Calu3 (cell line): ENCODE measurements at regions of chr10 and their contacts with region 1.

Region 1: DNA sequence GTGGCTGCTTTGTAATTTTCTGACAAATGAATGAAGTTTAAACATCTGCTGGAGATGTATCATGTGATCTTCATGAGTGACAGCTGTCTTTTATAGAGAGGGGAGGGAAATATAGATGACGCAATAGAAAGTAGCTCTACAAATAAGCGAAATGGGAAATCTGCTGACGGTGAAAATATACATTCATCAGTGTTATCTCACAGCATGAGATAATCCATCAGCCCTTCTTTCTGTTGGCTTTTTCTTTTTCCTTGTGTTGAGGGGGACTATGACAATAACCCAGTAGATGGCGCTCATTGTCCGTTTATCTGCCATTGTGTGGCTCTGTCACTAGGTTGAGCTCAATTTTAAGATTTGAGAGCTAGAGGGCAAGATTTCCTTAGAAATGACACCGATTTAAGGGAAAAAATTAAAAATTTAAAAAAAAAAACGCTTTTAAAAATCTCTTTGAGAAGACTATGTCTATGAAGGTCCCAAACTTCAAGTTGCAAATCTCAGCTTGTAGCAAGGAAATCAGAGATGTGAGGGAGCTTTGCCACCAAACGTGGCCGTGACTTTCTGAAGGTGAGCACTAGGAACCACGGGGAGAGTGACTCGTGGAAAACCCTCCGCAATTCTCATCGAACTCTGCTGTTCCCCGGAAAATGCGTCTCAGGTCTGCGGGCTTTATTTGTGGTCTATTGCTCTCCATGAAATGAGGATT is 114.6 kb upstream of the SFMBT2 start:
- DNase-seq: peak; percentile 71
- H3K4me3 Mint-ChIP-seq: no peak overlapping the region
- H3K27ac Mint-ChIP-seq: no peak overlapping the region
- H3K4me1 Mint-ChIP-seq: no peaks in the 10 kb centered on the region
- H3K27me3 Mint-ChIP-seq: peaks cover 35% of the 10 kb centered on the region
- CTCF ChIP-seq: peak; percentile 48

Region 2: DNA sequence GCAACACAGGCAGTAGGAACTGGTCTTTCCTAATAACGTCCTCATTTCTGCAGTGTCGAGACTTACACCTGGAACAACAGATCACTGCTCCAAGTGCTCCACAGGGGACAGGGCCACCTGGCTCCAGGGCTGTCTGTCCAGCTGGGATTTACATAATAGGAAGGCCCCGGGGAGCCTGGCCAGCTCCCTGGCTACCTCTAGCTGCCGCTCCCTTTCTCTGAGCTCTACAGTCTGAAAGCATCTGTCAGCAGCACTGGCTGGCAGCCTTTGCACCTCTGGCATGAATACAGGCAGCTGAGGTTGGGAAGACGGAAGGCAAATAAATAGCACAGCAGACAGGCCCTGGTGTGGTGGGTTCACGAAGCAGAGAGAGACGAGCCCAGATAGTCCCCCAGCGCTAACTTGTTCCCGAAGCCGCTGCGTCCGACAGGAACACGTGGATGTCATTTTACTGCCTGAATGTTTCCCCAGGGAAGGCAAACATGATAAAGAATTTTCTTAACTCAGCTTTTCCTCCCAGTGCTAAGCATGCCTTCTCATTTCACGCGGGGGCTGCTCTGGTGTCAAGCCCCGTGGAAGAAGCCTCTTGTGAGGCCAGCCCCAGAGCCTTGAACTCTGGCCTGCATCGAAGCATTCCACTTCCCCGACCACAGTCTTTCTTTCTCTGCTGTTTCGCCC is 35.9 kb after region 1 on chr10:
- CTCF ChIA-PET with region 1: no interaction called
- intact Hi-C with region 1: no loop called
- DNase-seq: no peak
- H3K4me3 Mint-ChIP-seq: no peak overlapping the region
- H3K27ac Mint-ChIP-seq: no peak overlapping the region
- H3K4me1 Mint-ChIP-seq: no peaks in the 10 kb centered on the region
- H3K27me3 Mint-ChIP-seq: peaks cover 53% of the 10 kb centered on the region
- CTCF ChIP-seq: no peak

Region 3: GRCh38 chr10:7756360-7756992 is 231.0 kb after region 1 on chr10:
- CTCF ChIA-PET with region 1: interaction called, 6 read pairs
- intact Hi-C with region 1: loop called (anchors 2 kb)
- DNase-seq: peak; percentile 47
- H3K4me3 Mint-ChIP-seq: no peak overlapping the region
- H3K27ac Mint-ChIP-seq: no peak overlapping the region
- H3K4me1 Mint-ChIP-seq: no peaks in the 10 kb centered on the region
- H3K27me3 Mint-ChIP-seq: no peaks in the 10 kb centered on the region
- CTCF ChIP-seq: peak; percentile 48

Region 4: GRCh38 chr10:7857262-7857661 is 331.8 kb after region 1 on chr10:
- CTCF ChIA-PET with region 1: interaction called, 3 read pairs
- intact Hi-C with region 1: loop called (anchors 10 kb)
- DNase-seq: peak; percentile 10
- H3K4me3 Mint-ChIP-seq: peak overlapping the region; percentile 51
- H3K27ac Mint-ChIP-seq: peak overlapping the region; percentile 6
- H3K4me1 Mint-ChIP-seq: peaks cover 58% of the 10 kb centered on the region
- H3K27me3 Mint-ChIP-seq: no peaks in the 10 kb centered on the region
- CTCF ChIP-seq: no peak

Region 5: DNA sequence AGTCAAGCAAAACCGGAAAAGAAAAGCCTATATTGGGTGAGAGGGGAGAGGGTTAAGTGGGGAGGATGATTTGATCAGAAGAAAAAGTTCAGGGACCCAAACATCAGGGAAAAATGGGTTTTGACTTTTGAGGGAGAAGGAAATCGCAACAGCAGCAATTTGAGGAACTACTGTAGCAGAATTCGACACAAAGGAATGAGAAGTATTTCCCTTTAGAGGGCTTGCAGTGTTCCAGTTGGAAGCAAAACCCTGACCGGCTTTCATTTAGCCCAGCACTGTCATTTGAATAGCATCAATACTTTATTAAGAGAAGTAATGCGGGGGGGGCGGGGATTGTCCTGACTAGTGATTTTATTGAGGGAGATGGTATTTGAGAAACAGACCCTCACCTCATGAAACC is 491.8 kb after region 1 on chr10:
- CTCF ChIA-PET with region 1: no interaction called
- intact Hi-C with region 1: loop called (anchors 10 kb)
- DNase-seq: no peak
- H3K4me3 Mint-ChIP-seq: no peak overlapping the region
- H3K27ac Mint-ChIP-seq: no peak overlapping the region
- H3K4me1 Mint-ChIP-seq: peaks cover 15% of the 10 kb centered on the region
- H3K27me3 Mint-ChIP-seq: no peaks in the 10 kb centered on the region
- CTCF ChIP-seq: no peak

Region 6: DNA sequence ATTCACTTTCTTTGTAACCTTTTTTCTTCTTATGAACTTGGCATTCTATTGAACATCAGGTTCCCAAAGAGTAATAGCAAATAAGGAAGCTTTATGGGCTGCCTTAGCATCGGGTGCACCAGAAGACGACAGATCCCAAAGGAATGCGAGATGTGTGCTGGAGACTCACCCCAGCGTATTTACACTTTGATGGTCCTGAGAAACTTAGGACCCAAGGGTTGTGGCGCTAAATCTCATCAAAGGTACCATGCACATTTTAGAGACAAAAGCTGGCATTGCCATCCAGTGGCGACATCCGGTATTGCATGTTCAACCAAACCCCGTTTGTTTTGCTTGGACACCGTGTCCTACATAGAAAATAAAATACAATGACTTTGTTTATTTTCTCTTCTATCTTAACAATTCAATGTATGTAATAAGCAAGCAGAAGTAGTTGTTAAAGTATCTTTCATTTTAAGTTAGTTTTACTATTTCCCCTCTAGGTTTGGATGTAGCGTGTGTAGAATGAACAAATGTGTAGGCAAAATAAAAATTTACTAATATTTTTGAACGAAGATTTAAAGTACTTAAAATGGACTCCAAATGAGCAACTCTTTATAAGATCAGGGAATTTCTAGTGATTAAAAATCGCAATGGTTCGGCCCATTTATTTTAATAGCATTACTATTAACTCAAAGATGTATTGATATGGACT is 1683.8 kb after region 1 on chr10:
- CTCF ChIA-PET with region 1: no interaction called
- intact Hi-C with region 1: loop called (anchors 5 kb)
- DNase-seq: peak; percentile 71
- H3K4me3 Mint-ChIP-seq: no peak overlapping the region
- H3K27ac Mint-ChIP-seq: no peak overlapping the region
- H3K4me1 Mint-ChIP-seq: peaks cover 8% of the 10 kb centered on the region
- H3K27me3 Mint-ChIP-seq: no peaks in the 10 kb centered on the region
- CTCF ChIP-seq: peak; percentile 70